ENCODE measurements at regions of chr13 and their contacts with region 1.

Region 1: GRCh38 chr13:26929971-26930730 is 169.6 kb upstream of the GPR12 start:
- DNase-seq: peak in 4 of 5 donors; percentile 77 to 86 (median 83)
- H3K4me3 ChIP-seq: no peak overlapping the region
- H3K27ac ChIP-seq: no peak overlapping the region
- H3K4me1 ChIP-seq: no peaks in the 10 kb centered on the region
- H3K27me3 ChIP-seq: no peaks in the 10 kb centered on the region
- CTCF ChIP-seq: peak; percentile 82

Region 2: GRCh38 chr13:26719356-26719945 is 210.7 kb before region 1 on chr13:
- intact Hi-C with region 1: loop called (anchors 10 kb)
- DNase-seq: no peak
- H3K4me3 ChIP-seq: no peak overlapping the region
- H3K27ac ChIP-seq: no peak overlapping the region
- H3K4me1 ChIP-seq: no peaks in the 10 kb centered on the region
- H3K27me3 ChIP-seq: no peaks in the 10 kb centered on the region
- CTCF ChIP-seq: no peak